ENCODE measurements at regions of chr5 and their contacts with region 1.

Region 1: GRCh38 chr5:80083101-80083890 is 48.1 kb downstream of the THBS4 start:
- DNase-seq: peak; percentile 71
- ATAC-seq: peak; percentile 82
- H3K4me3 ChIP-seq: peak overlapping the region in 1 of 2 experiments; percentile 23; a peak in 2 of 4 replicates
- H3K27ac ChIP-seq: no peak overlapping the region
- H3K4me1 ChIP-seq: peaks cover 6 to 18% of the 10 kb centered on the region in 2 experiments; a peak in 2 of 4 replicates
- H3K27me3 ChIP-seq: no peaks in the 10 kb centered on the region
- CTCF ChIP-seq: peak; percentile 63 to 86 (median 78)
- POLR2A ChIP-seq: no peak
- RAD21 ChIP-seq: peak; percentile 90

Region 2: GRCh38 chr5:79702606-79703382 is 380.5 kb before region 1 on chr5:
- CTCF ChIA-PET with region 1: no interaction called
- POLR2A ChIA-PET with region 1: no interaction called
- RAD21 ChIA-PET with region 1: no interaction called
- intact Hi-C with region 1: loop called (anchors 1 kb)
- DNase-seq: no peak
- ATAC-seq: no peak; the same call in 1 of the 2 replicates
- H3K4me3 ChIP-seq: no peak overlapping the region
- H3K27ac ChIP-seq: no peak overlapping the region
- H3K4me1 ChIP-seq: peaks cover 0 to 11% of the 10 kb centered on the region in 2 experiments; a peak in 2 of 4 replicates
- H3K27me3 ChIP-seq: no peaks in the 10 kb centered on the region
- CTCF ChIP-seq: peak; percentile 33 to 78 (median 71); a peak in 5 of 6 replicates
- POLR2A ChIP-seq: no peak
- RAD21 ChIP-seq: peak; percentile 42

Region 3: GRCh38 chr5:79878721-79879336 is 204.5 kb before region 1 on chr5:
- CTCF ChIA-PET with region 1: interaction called, 50 read pairs
- POLR2A ChIA-PET with region 1: no interaction called
- RAD21 ChIA-PET with region 1: interaction called, 3 to 4 read pairs
- intact Hi-C with region 1: loop called (anchors 1 kb)
- DNase-seq: peak; percentile 31
- ATAC-seq: peak; percentile 98
- H3K4me3 ChIP-seq: no peak overlapping the region
- H3K27ac ChIP-seq: no peak overlapping the region
- H3K4me1 ChIP-seq: no peaks in the 10 kb centered on the region
- H3K27me3 ChIP-seq: no peaks in the 10 kb centered on the region
- CTCF ChIP-seq: peak; percentile 53 to 84 (median 80); a peak in 5 of 6 replicates
- POLR2A ChIP-seq: no peak
- RAD21 ChIP-seq: peak; percentile 49

Region 4: GRCh38 chr5:79924936-79925893 is 158.1 kb before region 1 on chr5:
- CTCF ChIA-PET with region 1: interaction called, 4 read pairs
- POLR2A ChIA-PET with region 1: no interaction called
- RAD21 ChIA-PET with region 1: no interaction called
- intact Hi-C with region 1: loop called (anchors 1 kb)
- DNase-seq: no peak
- ATAC-seq: peak; percentile 70
- H3K4me3 ChIP-seq: no peak overlapping the region
- H3K27ac ChIP-seq: no peak overlapping the region
- H3K4me1 ChIP-seq: no peaks in the 10 kb centered on the region
- H3K27me3 ChIP-seq: peaks cover 5% of the 10 kb centered on the region; the same call in 1 of the 2 replicates
- CTCF ChIP-seq: peak; percentile 37 to 45 (median 38); a peak in 5 of 6 replicates
- POLR2A ChIP-seq: no peak
- RAD21 ChIP-seq: peak; percentile 64

Region 5: GRCh38 chr5:80308526-80308925 is 225.2 kb after region 1 on chr5:
- CTCF ChIA-PET with region 1: interaction called, 14 read pairs
- POLR2A ChIA-PET with region 1: no interaction called
- RAD21 ChIA-PET with region 1: interaction called in 1 of 2 experiments, 4 read pairs
- intact Hi-C with region 1: no loop called
- DNase-seq: no peak
- ATAC-seq: no peak
- H3K4me3 ChIP-seq: no peak overlapping the region
- H3K27ac ChIP-seq: no peak overlapping the region
- H3K4me1 ChIP-seq: no peaks in the 10 kb centered on the region
- H3K27me3 ChIP-seq: no peaks in the 10 kb centered on the region
- CTCF ChIP-seq: no peak
- POLR2A ChIP-seq: no peak
- RAD21 ChIP-seq: no peak

Measured in HCT116 (cell line).